ENCODE measurements at regions of chrX and their contacts with region 1.

Region 1: DNA sequence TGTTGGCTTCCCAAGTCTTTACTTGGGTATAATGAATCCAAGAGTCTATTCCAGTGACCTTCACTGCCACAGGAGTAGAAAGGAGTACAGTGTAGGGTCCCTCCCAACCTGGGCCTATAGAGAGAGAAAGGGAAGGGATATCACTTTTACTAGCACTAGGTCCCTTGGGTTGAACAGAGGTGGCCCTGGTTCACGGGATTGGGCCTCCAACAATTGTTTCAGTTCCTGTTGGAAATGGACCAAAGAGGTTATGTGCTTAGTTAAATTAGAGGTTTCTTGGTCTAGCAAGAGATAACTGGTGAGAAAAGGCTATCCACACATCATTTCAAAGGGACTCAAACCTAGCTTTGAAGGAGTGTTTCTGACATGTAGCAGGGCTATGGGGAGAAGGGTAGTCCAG is 57.1 kb upstream of the MED14 start:
- DNase-seq: no peak
- ATAC-seq: no peak
- H3K4me3 Mint-ChIP-seq: no peak overlapping the region
- H3K27ac Mint-ChIP-seq: no peak overlapping the region
- H3K4me1 Mint-ChIP-seq: peaks cover 1% of the 10 kb centered on the region
- H3K27me3 Mint-ChIP-seq: peaks cover 6% of the 10 kb centered on the region

Region 2: GRCh38 chrX:40539214-40540142 is 253.0 kb before region 1 on chrX:
- CTCF ChIA-PET with region 1: interaction called, 19 read pairs
- DNase-seq: peak; percentile 84
- ATAC-seq: peak; percentile 92
- H3K4me3 Mint-ChIP-seq: no peak overlapping the region
- H3K27ac Mint-ChIP-seq: peak overlapping the region; percentile 47
- H3K4me1 Mint-ChIP-seq: peaks cover 18% of the 10 kb centered on the region
- H3K27me3 Mint-ChIP-seq: peaks cover 24% of the 10 kb centered on the region

Region 3: DNA sequence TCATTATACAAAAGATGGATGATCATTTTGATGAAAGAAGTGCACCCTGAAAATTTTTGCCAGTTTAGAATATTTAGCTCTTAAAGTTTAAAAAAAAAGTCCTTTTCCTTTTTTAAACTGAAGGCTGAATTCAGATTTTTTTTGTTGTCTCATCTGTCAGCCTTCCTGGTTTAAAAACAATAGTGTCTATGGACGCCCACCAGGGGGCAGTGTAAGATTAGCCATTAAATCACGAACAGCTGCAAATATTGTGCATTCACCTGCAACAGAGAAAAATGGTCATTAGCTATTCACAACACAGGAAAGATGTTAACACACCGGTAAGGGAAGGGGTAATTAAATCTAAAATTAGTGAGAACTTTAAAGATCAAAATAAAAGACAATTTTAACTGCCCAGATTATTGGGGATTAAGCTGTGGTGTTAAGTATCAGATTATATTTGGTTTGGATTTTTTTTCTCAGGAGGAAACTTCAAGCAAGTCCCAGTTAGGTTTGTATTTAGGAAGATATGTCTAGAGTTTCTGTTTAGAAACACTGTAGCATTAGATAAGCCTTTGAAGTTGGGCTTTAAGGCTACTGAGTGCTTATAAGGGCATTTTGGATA is 140.7 kb before region 1 on chrX:
- CTCF ChIA-PET with region 1: interaction called, 39 read pairs
- DNase-seq: peak; percentile 75
- ATAC-seq: no peak
- H3K4me3 Mint-ChIP-seq: no peak overlapping the region
- H3K27ac Mint-ChIP-seq: peak overlapping the region; percentile 52
- H3K4me1 Mint-ChIP-seq: peaks cover 3% of the 10 kb centered on the region
- H3K27me3 Mint-ChIP-seq: no peaks in the 10 kb centered on the region

Region 4: GRCh38 chrX:40719218-40719617 is 73.2 kb before region 1 on chrX:
- CTCF ChIA-PET with region 1: no interaction called
- DNase-seq: no peak
- ATAC-seq: no peak
- H3K4me3 Mint-ChIP-seq: no peak overlapping the region
- H3K27ac Mint-ChIP-seq: peak overlapping the region; percentile 43
- H3K4me1 Mint-ChIP-seq: peaks cover 26% of the 10 kb centered on the region
- H3K27me3 Mint-ChIP-seq: no peaks in the 10 kb centered on the region

Region 5: DNA sequence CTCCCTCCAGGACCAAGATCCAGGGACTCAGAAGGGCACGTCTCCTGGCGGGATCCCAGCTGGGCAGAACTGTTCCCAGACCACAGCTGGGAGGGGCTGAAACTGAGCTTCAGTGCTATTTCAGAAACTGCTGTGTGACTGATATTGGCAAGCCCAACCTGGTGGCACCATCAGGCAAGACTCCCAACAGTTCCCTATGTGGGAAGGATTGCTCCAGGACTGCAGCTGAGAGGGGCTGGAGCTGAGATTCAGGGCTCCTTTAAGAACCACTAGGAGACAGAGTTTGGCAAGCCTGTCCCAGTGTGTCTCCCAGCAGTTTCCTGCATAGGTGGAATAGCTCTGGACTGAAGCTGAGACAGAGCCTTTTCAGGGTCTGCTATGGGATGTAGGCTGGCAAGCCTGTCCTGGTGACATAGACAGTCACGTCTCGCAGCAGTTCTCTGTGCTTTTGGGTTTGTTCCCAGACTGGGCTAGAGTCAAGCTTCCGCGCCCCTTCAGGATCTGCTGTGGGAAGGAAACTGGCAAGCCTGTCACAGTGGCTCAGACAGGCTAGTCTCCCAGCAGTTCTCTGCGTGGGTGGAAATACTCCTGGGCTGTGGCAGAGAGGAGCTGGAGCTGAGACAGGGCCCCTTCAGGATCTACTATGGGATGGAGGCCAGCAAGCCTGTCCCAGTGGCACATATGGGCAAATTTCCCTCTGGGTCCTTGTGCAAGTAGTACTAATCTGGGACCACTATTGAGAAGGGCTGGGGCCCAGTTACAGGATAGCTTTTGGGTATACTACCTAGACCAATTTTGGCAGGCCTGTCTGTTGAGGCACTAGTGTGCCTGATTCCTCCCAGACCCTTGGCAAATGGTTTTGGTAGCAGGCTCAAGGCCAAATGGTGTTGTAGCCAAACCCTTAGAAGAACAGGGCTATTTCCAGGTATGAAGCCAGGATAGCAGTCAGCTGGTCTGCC is 36.9 kb before region 1 on chrX:
- CTCF ChIA-PET with region 1: no interaction called
- DNase-seq: no peak
- ATAC-seq: no peak
- H3K4me3 Mint-ChIP-seq: no peak overlapping the region
- H3K27ac Mint-ChIP-seq: no peak overlapping the region
- H3K4me1 Mint-ChIP-seq: peaks cover 2% of the 10 kb centered on the region
- H3K27me3 Mint-ChIP-seq: no peaks in the 10 kb centered on the region

Measured in activated CD8-positive, alpha-beta memory T cell treated with anti-CD3 and anti-CD28 coated beads, Interleukin-2, amount 10 ng/mL, durations not matched to agents 7 days and 5 days (primary cell).